ENCODE measurements at regions of chr6 and their contacts with region 1.

Region 1: DNA sequence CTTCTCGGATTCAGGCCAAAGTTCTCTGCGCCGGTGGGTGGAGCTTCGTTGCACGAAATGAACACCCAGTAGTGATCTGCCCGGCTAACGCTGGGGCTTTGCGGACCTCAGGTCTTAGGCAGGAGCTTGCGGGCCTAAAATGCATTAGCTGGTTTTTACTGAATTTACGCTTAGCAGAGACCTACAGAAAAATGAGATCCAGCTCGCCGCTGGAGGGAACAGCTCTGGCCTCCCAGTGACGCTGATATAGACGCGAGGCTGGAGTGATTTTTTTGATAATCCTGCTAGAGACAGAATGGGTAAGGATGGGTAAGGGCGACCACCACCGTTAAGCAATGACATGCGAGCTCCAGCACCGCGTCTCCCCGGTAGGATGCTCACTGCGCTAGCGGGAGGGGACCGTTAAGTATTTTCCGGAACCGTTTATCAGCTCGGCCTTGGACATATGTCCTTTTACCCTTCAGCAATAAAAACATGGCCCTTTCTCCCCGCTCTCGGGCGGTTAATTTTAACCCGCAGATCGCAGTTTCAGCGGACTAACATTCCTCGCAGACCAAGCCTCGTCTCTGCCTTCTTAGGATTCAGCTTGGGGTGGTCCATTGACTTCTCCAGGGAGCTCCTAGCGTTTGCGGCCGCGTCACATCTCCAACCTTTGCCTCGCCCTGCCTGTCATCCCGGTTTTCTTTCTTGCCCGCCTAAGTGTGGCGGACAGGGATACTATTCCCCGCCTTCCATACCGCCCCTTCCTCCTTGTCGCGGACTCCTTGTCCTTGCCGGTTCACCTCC is 109.3 kb downstream of the GPX5 start:
- DNase-seq: peak in 1 of 2 experiments; percentile 71
- H3K4me3 ChIP-seq: peak overlapping the region; percentile 75 to 90 (median 76)
- H3K27ac ChIP-seq: no peak overlapping the region
- H3K4me1 ChIP-seq: peaks cover 0 to 4% (median 0%) of the 10 kb centered on the region in 4 experiments; a peak in 3 of 7 replicates
- H3K27me3 ChIP-seq: peaks cover 2 to 40% (median 21%) of the 10 kb centered on the region in 4 experiments
- CTCF ChIP-seq: no peak
- EP300 ChIP-seq: no peak
- POLR2A ChIP-seq: no peak
- RAD21 ChIP-seq: no peak

Region 2: DNA sequence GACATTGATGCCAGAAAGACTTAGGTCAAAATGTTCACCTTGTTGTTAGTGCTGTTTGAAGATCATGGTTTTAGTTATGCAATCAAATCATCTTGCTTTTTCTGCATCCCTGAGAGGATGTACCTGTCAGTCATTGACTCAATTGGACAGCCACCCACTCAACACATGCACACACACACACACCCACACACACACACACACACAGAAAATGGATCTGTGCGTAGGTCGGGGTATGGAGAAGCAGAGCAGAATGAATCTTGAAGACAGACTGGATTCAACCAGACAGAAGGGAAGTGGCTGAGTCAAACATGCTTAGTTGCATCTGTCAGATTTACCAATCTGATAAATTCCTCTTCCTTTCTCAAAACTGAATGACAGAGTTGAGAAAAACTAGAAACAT is 172.6 kb before region 1 on chr6:
- CTCF ChIA-PET with region 1: no interaction called
- POLR2A ChIA-PET with region 1: no interaction called
- DNase-seq: no peak
- H3K4me3 ChIP-seq: no peak overlapping the region
- H3K27ac ChIP-seq: no peak overlapping the region
- H3K4me1 ChIP-seq: no peaks in the 10 kb centered on the region
- H3K27me3 ChIP-seq: peaks cover 0 to 4% (median 1%) of the 10 kb centered on the region in 4 experiments; a peak in 3 of 7 replicates
- CTCF ChIP-seq: no peak
- EP300 ChIP-seq: no peak
- POLR2A ChIP-seq: no peak
- RAD21 ChIP-seq: no peak

Region 3: DNA sequence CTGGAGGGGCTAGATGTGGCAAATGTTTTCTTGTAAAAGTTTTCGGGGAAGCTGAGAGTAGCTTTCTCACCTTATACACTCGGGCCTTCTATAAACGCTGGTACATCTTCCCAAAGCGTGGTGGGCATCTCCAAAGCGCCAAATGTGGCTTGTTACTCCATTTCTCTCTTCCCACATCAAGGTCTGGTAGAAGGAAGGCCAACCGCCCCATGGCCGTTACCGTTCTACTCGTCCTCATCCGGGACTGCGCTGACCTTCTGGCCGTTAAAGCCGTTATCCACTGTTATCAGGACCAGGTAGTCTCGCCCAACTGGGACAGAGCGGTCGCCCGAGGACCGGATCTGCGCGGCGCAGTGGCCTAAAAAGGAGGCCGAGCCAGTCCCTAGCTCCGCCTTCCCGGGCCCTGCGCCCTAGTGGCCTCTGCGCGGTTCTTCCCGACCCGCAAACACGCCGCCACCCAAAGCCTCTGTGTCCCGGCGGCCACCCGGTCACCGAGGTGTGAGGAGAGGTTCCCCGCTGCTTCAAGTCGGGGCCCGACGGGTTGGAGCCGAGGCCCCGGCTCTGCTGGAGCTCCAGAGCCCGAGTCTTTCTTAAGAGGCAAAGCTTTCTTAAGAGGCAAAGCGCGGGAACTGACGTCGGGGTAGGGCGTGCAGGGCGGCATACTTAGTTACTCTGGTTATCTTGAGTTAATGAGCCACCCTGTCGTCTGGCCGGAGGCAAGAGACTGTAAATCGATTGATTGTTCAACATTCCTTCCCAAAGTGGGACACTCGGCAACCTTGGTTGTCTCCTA is 18.8 kb before region 1 on chr6:
- CTCF ChIA-PET with region 1: interaction called, 4 read pairs
- POLR2A ChIA-PET with region 1: interaction called, 10 read pairs
- DNase-seq: peak in 1 of 2 experiments; percentile 69
- H3K4me3 ChIP-seq: peak overlapping the region; percentile 41 to 60 (median 50)
- H3K27ac ChIP-seq: no peak overlapping the region
- H3K4me1 ChIP-seq: no peaks in the 10 kb centered on the region; a peak in 3 of 7 replicates
- H3K27me3 ChIP-seq: peaks cover 0 to 6% (median 4%) of the 10 kb centered on the region in 4 experiments; a peak in 2 of 7 replicates
- CTCF ChIP-seq: no peak
- EP300 ChIP-seq: no peak
- POLR2A ChIP-seq: 0 out of 3 replicates have a peak, but pooled peaks of 1 of the 2 experiments have one; percentile 66
- RAD21 ChIP-seq: no peak

Region 4: DNA sequence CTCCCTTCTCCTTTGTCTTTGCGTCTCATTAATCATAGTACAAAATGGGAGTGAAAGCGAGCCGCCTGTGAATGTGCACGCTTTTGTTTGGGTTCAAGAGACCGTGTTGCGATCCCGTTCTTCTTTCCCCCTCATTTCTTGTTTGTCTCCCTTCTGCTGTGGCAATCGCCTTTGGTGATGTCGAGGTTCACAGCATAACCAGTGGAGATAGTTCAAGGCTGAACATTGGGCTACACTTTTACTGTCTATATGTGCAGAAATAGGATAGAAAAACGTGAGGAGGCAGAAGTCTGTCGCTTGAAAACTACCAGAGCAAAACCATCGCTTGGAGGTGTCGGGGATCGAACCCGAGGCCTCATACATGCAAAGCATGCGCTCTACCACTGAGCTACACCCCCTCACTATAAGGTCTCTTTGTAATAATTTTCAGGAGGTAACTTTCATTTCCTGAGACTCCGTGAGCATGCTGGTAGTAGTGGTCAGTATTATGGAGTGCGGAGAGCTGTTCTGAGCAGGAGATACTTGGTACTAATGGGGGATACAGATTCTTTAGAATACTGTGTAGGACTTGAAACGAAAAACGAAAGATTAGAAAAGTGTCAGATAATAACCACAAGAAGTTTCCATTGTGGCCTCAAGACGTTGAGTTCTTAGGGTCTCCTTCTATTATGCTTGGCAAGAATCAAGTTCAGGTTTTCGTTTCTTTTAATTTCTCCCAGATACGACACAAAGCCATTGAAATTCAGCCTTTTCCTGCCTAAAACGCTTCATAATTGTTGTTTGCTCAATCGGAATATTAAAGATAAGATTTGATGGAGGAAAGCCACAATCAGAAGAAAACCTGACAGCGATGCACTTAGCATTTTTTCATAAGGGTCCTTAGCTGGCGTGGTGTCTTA is 182.2 kb after region 1 on chr6:
- CTCF ChIA-PET with region 1: no interaction called
- POLR2A ChIA-PET with region 1: no interaction called
- DNase-seq: peak in 1 of 2 experiments; percentile 81
- H3K4me3 ChIP-seq: peak overlapping the region; percentile 50 to 82 (median 59); a peak in 7 of 8 replicates
- H3K27ac ChIP-seq: no peak overlapping the region
- H3K4me1 ChIP-seq: peaks cover 0 to 7% (median 5%) of the 10 kb centered on the region in 4 experiments; a peak in 5 of 7 replicates
- H3K27me3 ChIP-seq: peaks cover 38 to 73% (median 64%) of the 10 kb centered on the region in 4 experiments
- CTCF ChIP-seq: no peak
- EP300 ChIP-seq: no peak
- POLR2A ChIP-seq: no peak
- RAD21 ChIP-seq: no peak

Measured in H1 (cell line).